ENCODE measurements at regions of chr7 and their contacts with region 1.

Region 1: DNA sequence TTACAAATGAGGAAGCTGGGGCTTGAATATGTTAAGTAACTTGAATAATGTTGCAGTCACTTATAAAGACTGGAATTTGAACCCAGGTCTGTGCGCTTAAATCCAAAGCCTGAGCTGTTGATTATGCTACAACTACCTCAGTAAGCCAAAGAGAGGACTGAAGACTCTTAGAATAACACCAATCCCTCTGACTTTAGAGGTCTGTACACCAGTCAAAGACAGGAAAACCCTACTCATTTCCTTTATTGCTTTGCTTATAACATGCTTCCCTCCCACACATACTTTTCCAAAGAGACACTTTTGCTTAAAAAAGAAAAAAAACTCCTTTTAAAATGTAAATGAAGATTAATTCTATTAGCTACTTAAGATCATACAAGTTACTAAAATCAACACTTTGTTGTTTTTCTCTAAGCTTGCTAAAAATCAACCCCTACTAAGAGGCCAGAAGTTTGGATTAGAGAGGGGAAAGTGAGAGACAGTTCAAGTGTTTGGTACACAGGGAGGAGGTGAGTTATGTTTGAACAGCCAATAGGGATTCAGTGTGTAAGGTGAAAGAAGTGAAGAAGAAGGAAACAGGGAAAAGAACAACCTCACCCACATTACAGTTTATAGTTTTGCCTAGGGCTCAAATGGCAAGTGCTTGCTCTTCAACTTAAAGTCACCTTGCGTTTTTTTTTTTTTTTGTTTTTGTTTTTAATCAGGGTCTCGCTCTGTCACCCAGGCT is 74.8 kb downstream of the MDH2 start:
- DNase-seq: no peak
- ATAC-seq: no peak
- H3K4me3 ChIP-seq: no peak overlapping the region
- H3K27ac ChIP-seq: no peak overlapping the region
- H3K4me1 ChIP-seq: no peaks in the 10 kb centered on the region
- H3K27me3 ChIP-seq: no peaks in the 10 kb centered on the region
- CTCF ChIP-seq: no peak
- POLR2A ChIP-seq: no peak
- RAD21 ChIP-seq: no peak

Region 2: GRCh38 chr7:75937958-75938786 is 184.5 kb before region 1 on chr7:
- CTCF ChIA-PET with region 1: no interaction called
- POLR2A ChIA-PET with region 1: interaction called, 14 read pairs
- dilution Hi-C with region 1: no loop called
- in situ Hi-C with region 1: no loop called
- intact Hi-C with region 1: no loop called
- DNase-seq: peak; percentile 96
- ATAC-seq: peak; percentile 94
- H3K4me3 ChIP-seq: no peak overlapping the region
- H3K27ac ChIP-seq: peak overlapping the region; percentile 78
- H3K4me1 ChIP-seq: peaks cover 5% of the 10 kb centered on the region
- H3K27me3 ChIP-seq: no peaks in the 10 kb centered on the region
- CTCF ChIP-seq: no peak
- POLR2A ChIP-seq: no peak
- RAD21 ChIP-seq: no peak

Region 3: DNA sequence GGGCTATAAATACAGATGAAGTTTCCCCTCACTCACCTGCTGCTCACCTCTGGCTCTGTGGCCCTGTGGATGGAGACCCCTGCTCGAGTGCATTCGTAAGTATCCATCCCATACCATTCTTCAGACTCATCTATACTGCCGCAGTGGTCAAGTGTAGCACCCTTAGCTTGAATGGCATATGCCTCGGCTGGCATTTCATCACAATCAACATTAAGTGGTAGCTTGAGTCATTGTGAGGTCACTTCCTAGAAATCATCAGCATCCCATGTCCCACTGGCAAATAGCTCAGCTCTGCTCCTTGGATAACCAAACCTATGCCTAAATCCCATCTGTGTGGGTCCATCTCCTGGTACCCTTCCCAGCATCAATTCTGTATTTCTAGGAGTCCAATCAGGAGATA is 36.6 kb before region 1 on chr7:
- CTCF ChIA-PET with region 1: interaction called, 8 read pairs
- POLR2A ChIA-PET with region 1: interaction called, 10 read pairs
- dilution Hi-C with region 1: no loop called
- in situ Hi-C with region 1: no loop called
- intact Hi-C with region 1: no loop called
- DNase-seq: peak; percentile 59
- ATAC-seq: no peak
- H3K4me3 ChIP-seq: no peak overlapping the region
- H3K27ac ChIP-seq: no peak overlapping the region
- H3K4me1 ChIP-seq: peaks cover 20% of the 10 kb centered on the region
- H3K27me3 ChIP-seq: no peaks in the 10 kb centered on the region
- CTCF ChIP-seq: no peak
- POLR2A ChIP-seq: no peak
- RAD21 ChIP-seq: no peak